CD4-positive, alpha-beta memory T cell (primary cell): ENCODE measurements at regions of chr4 and their contacts with region 1.

Region 1: GRCh38 chr4:26330186-26330787 is 9.5 kb downstream of the RBPJ start:
- DNase-seq: peak in 4 of 5 donors; percentile 53 to 61 (median 56)
- H3K4me3 ChIP-seq: no peak overlapping the region
- H3K4me3 Mint-ChIP-seq: peak overlapping the region in 4 of 8 donors; percentile 8 to 48 (median 38)
- H3K27ac ChIP-seq: no peak overlapping the region
- H3K27ac Mint-ChIP-seq: peak overlapping the region in 2 of 7 donors; percentile 44 to 78
- H3K4me1 ChIP-seq: peaks cover 24% of the 10 kb centered on the region
- H3K4me1 Mint-ChIP-seq: peaks cover 37 to 46% (median 42%) of the 10 kb centered on the region in 4 donors
- H3K27me3 ChIP-seq: no peaks in the 10 kb centered on the region
- H3K27me3 Mint-ChIP-seq: no peaks in the 10 kb centered on the region

Region 2: DNA sequence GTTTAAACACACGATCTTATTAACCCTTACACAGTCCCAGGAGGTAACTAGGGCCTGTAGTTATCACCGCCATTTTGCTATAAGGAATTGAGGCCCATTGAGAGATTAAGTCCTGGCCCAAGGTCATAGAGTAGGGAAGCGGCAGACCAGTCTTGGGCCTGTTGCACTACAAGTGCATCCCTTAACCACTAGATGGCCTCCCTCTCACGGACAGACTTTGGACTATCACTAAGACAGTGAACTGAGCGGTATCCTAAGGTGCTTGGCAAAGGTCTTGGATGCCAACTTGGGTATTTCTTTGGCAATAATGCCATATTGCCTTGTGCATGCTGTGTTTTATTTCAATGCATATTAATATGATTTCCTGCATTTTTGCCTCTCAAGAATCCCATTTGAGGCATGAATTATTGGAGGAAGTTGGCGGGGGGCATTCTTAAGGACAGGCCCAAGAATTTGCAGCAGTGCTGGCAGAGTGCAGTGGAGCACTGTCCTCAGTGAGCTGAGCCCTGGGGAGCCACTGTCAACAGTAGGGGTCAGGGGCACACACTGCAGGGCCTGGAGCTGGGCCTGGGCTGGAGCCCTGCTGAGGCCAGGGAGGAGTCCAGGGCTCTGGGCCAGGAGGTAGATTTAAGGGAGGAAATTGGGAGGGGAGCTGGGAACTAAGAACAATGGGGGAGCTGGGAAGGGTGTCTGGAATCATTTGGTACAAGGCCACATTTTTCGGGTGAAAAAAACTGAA is 268.9 kb before region 1 on chr4:
- CTCF ChIA-PET with region 1: interaction called, 15 read pairs
- POLR2A ChIA-PET with region 1: no interaction called
- intact Hi-C with region 1: loop called (anchors 1 kb)
- DNase-seq: peak in 4 of 5 donors; percentile 15 to 26 (median 16)
- H3K4me3 ChIP-seq: no peak overlapping the region
- H3K4me3 Mint-ChIP-seq: no peak overlapping the region
- H3K27ac ChIP-seq: no peak overlapping the region
- H3K27ac Mint-ChIP-seq: no peak overlapping the region
- H3K4me1 ChIP-seq: no peaks in the 10 kb centered on the region
- H3K4me1 Mint-ChIP-seq: peaks cover 2 to 8% (median 7%) of the 10 kb centered on the region in 4 donors
- H3K27me3 ChIP-seq: no peaks in the 10 kb centered on the region
- H3K27me3 Mint-ChIP-seq: no peaks in the 10 kb centered on the region

Region 3: DNA sequence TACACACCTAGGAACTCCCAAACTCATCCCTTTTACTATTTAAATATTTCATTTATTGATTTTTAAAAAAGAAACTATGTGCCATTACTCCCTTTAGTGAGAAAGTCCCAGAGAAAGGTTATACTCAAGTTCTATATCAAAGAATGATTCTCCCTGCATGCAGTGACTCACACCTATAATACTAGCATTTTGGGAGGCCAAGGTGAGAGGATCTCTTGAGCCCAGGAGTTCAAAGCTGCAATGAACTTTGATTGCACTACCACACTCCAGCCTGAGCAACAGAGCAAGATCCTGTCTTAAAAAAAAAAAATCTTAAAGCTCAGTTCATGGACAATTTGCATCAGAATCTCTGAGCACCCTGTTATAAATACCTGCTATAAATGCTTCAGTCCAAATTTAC is 18.7 kb before region 1 on chr4:
- CTCF ChIA-PET with region 1: interaction called, 10 read pairs
- POLR2A ChIA-PET with region 1: interaction called, 4 read pairs
- intact Hi-C with region 1: no loop called
- DNase-seq: no peak
- H3K4me3 ChIP-seq: no peak overlapping the region
- H3K4me3 Mint-ChIP-seq: no peak overlapping the region
- H3K27ac ChIP-seq: no peak overlapping the region
- H3K27ac Mint-ChIP-seq: peak overlapping the region in 3 of 7 donors; percentile 7 to 79 (median 30)
- H3K4me1 ChIP-seq: peaks cover 7% of the 10 kb centered on the region
- H3K4me1 Mint-ChIP-seq: peaks cover 7 to 23% (median 11%) of the 10 kb centered on the region in 4 donors
- H3K27me3 ChIP-seq: no peaks in the 10 kb centered on the region
- H3K27me3 Mint-ChIP-seq: no peaks in the 10 kb centered on the region

Region 4: GRCh38 chr4:26356081-26356501 is 25.8 kb after region 1 on chr4:
- CTCF ChIA-PET with region 1: interaction called, 117 read pairs
- POLR2A ChIA-PET with region 1: no interaction called
- intact Hi-C with region 1: no loop called
- DNase-seq: peak in 1 of 5 donors; percentile 9
- H3K4me3 ChIP-seq: no peak overlapping the region
- H3K4me3 Mint-ChIP-seq: no peak overlapping the region
- H3K27ac ChIP-seq: peak overlapping the region; percentile 2
- H3K27ac Mint-ChIP-seq: no peak overlapping the region
- H3K4me1 ChIP-seq: peaks cover 59% of the 10 kb centered on the region
- H3K4me1 Mint-ChIP-seq: peaks cover 25 to 36% (median 30%) of the 10 kb centered on the region in 4 donors
- H3K27me3 ChIP-seq: no peaks in the 10 kb centered on the region
- H3K27me3 Mint-ChIP-seq: no peaks in the 10 kb centered on the region

Region 5: DNA sequence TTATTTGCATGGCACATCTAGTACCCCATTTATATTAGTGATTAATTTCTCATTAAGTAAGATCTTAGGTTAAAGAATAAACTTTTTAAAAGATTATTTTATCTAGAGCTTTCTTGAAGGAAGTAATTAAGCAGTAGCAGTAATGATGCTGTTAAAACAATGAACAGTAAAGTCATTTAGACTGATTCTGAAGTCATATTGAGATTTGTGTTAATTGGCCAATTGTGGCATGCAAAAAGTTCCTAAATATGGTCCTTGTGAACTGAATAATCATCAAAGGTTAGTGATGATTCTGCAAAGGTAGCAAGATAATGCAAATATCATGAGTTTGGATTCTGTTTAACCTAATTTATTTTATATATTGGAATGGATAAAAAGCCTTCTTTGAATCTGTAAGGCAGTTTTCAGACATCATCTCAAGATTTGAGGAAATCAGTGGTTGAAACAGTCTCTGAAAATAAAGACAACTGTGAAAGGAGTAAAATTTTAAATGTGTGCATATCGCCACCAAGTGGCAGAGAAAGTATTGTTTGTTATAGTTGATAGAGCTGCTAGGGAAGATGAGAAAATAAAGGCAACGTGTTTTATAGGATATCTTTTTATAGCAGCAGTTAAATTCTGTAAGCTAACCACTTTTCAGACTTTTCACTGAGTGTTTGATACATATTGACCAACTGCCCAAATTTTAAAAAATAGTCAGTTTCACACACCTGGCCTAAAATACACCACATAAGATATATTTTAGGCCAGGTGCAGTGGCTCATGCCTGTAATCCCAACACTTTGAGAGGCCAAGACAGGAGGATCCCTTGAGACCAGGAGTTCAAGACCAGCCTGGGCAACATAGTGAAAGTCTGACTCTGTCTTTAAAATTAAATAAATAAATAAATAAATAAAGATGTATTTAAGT is 80.4 kb after region 1 on chr4:
- CTCF ChIA-PET with region 1: interaction called, 300 read pairs
- POLR2A ChIA-PET with region 1: interaction called, 8 read pairs
- intact Hi-C with region 1: loop called (anchors 1 kb)
- DNase-seq: peak in 4 of 5 donors; percentile 51 to 63 (median 58)
- H3K4me3 ChIP-seq: no peak overlapping the region
- H3K4me3 Mint-ChIP-seq: no peak overlapping the region
- H3K27ac ChIP-seq: no peak overlapping the region
- H3K27ac Mint-ChIP-seq: no peak overlapping the region
- H3K4me1 ChIP-seq: no peaks in the 10 kb centered on the region
- H3K4me1 Mint-ChIP-seq: peaks cover 0 to 3% (median 0%) of the 10 kb centered on the region in 4 donors
- H3K27me3 ChIP-seq: no peaks in the 10 kb centered on the region
- H3K27me3 Mint-ChIP-seq: no peaks in the 10 kb centered on the region